Right ventricle myocardium superior (tissue), 1 donor: ENCODE measurements at regions of chr2 and their contacts with region 1.

Region 1: DNA sequence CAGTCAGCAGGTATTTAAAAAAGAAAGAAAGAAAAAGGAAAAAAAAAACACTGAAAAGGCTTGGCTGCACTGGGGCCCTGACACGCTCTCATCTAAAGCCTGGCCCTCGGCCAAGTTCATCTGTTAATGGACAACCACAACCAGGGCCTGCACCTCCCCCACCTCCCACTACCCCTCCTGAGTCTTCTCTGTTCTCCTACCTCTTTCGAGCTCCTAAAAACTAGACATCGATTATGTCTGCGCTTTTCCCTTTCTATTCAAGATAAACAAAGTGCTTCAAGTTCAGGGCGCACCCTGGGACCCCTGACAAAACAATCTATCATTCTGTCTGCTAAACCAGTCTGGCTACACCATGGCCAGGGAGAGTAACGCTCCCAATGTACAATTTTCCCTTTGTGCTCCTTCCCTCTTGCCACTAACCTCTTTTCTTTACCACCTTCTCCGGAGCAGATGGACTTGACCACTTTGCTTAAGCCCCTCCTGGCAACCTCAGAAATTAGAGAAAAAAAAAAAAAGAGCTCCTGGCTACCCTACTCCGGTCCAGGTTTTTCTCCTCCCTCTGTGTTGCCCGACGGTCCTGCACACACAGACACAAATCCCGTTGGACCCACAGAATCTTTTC is 22.7 kb downstream of the BCL11A start:
- DNase-seq: peak; percentile 78
- ATAC-seq: peak; percentile 74

Region 2: GRCh38 chr2:60439219-60439974 is 91.4 kb before region 1 on chr2:
- intact Hi-C with region 1: loop called (anchors 10 kb)
- DNase-seq: peak; percentile 67
- ATAC-seq: peak; percentile 80